ENCODE measurements at regions of chr16 and their contacts with region 1.

Region 1: GRCh38 chr16:3150346-3151218 is 15.8 kb downstream of the ZNF213 start:
- DNase-seq: peak; percentile 96
- ATAC-seq: peak; percentile 86
- H3K4me3 ChIP-seq: peak overlapping the region; percentile 58 to 87 (median 71)
- H3K4me3 Mint-ChIP-seq: peak overlapping the region; percentile 92
- H3K27ac ChIP-seq: peak overlapping the region; percentile 29 to 54
- H3K27ac Mint-ChIP-seq: peak overlapping the region; percentile 95
- H3K4me1 ChIP-seq: peaks cover 22 to 37% of the 10 kb centered on the region in 2 donors
- H3K4me1 Mint-ChIP-seq: peaks cover 28% of the 10 kb centered on the region
- H3K27me3 ChIP-seq: no peaks in the 10 kb centered on the region
- H3K27me3 Mint-ChIP-seq: no peaks in the 10 kb centered on the region
- CTCF ChIP-seq: no peak

Region 2: DNA sequence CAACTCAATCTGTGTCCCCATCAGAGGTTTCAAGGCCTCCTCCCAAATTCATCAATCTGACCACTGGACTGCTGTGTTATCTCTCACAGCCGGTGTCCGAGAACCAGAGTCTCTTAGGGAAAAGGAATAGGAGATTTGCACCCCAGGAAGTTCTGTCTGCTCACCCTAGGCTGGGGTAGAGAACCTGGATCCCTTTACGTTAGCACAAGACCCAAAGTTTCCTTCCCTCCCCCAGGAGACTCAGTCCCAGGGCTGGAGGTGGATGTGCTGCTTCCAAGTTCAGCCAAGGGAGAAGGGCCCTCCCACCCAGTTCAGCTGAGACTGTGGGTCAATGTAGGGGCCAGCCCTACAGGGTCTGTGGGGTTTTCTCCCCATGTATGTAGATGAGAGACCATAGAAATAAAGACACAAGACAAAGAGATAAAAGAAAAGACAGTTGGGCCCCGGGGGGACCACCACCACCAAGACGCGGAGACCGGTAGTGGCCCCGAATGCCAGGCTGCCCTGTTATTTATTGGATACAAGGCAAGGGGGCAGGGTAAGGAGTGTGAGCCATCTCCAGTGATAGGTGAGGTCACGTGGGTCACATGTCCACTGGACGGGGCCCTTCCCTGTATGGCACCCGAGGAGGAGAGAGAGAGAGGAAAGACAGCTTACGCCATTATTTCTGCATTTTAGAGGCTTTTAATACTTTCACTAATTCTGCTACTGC is 14.7 kb after region 1 on chr16:
- CTCF ChIA-PET with region 1: interaction called, 14 read pairs
- POLR2A ChIA-PET with region 1: no interaction called
- intact Hi-C with region 1: loop called (anchors 2 kb)
- DNase-seq: no peak
- ATAC-seq: no peak
- H3K4me3 ChIP-seq: peak overlapping the region in 4 of 5 experiments; percentile 25 to 57 (median 44)
- H3K4me3 Mint-ChIP-seq: peak overlapping the region; percentile 63
- H3K27ac ChIP-seq: peak overlapping the region; percentile 38 to 68
- H3K27ac Mint-ChIP-seq: peak overlapping the region; percentile 65
- H3K4me1 ChIP-seq: peaks cover 8 to 9% of the 10 kb centered on the region in 2 donors
- H3K4me1 Mint-ChIP-seq: peaks cover 10% of the 10 kb centered on the region
- H3K27me3 ChIP-seq: peaks cover 0 to 28% (median 11%) of the 10 kb centered on the region in 4 experiments
- H3K27me3 Mint-ChIP-seq: peaks cover 12% of the 10 kb centered on the region
- CTCF ChIP-seq: no peak

Region 3: DNA sequence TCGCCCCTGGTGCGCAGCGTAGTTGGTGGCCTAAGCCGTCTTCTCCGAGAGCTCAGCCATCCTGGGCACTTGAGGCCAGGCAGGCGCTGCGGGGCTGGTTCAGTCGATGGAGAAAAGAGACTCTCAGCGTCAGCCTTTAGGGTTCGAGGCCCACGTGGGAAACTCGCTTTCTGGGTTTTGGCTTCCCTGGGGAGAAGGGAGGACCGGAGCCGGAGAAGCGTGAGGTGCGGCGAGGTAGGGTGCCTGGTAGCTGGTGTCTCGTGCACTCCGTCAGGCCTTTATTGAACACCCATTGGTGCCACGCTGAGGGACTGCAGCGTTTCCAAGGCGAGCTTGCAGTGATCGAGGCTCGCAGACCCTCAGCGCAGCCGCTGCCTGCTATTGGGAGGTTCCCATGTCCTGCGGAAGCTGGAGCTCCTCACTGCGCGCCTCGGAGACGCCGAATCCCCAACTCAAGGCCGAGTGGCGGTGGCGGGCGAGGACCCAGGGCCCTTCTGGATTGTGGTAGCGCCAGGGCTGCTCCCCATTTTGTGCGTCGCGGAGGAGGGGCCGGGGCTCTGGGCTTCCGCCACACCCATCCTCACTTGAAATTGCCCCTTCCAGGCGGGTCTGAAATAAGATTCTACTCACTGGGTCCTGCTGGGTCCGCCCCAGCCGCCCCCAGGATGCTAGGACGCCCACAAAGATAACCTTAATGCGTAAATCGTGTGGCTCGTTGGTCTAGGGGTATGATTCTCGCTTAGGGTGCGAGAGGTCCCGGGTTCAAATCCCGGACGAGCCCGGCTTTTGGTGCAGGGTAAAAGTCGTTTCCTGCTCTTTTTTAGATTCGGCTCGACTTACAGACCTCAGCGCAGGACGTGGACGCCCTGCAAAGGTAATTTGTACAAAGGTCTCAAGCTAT is 38.6 kb after region 1 on chr16:
- CTCF ChIA-PET with region 1: interaction called, 4 read pairs
- POLR2A ChIA-PET with region 1: no interaction called
- intact Hi-C with region 1: loop called (anchors 2 kb)
- DNase-seq: peak; percentile 58
- ATAC-seq: no peak
- H3K4me3 ChIP-seq: peak overlapping the region in 2 of 5 experiments; percentile 1 to 11
- H3K4me3 Mint-ChIP-seq: peak overlapping the region; percentile 73
- H3K27ac ChIP-seq: no peak overlapping the region
- H3K27ac Mint-ChIP-seq: peak overlapping the region; percentile 46
- H3K4me1 ChIP-seq: peaks cover 27 to 29% of the 10 kb centered on the region in 2 donors
- H3K4me1 Mint-ChIP-seq: peaks cover 36% of the 10 kb centered on the region
- H3K27me3 ChIP-seq: peaks cover 0 to 95% (median 74%) of the 10 kb centered on the region in 4 experiments
- H3K27me3 Mint-ChIP-seq: peaks cover 67% of the 10 kb centered on the region
- CTCF ChIP-seq: no peak

Region 4: GRCh38 chr16:3282730-3283524 is 132.3 kb after region 1 on chr16 and contains the start of gene ZNF263:
- CTCF ChIA-PET with region 1: no interaction called
- POLR2A ChIA-PET with region 1: no interaction called
- intact Hi-C with region 1: loop called (anchors 2 kb)
- DNase-seq: peak; percentile 96
- ATAC-seq: peak; percentile 89
- H3K4me3 ChIP-seq: peak within 1 kb of the TSS; percentile 78 to 100 (median 95)
- H3K4me3 Mint-ChIP-seq: peak within 1 kb of the TSS; percentile 97
- H3K27ac ChIP-seq: peak within 1 kb of the TSS; percentile 97 to 99
- H3K27ac Mint-ChIP-seq: peak within 1 kb of the TSS; percentile 98
- H3K4me1 ChIP-seq: peaks cover 22 to 30% of the 10 kb centered on the region in 2 donors
- H3K4me1 Mint-ChIP-seq: peaks cover 37% of the 10 kb centered on the region
- H3K27me3 ChIP-seq: no peaks in the 10 kb centered on the region
- H3K27me3 Mint-ChIP-seq: no peaks in the 10 kb centered on the region
- CTCF ChIP-seq: no peak
- total RNA-seq, gene ZNF263: 43.0 and 46.0 TPM in 2 replicates